PC-3 (cell line): ENCODE measurements at regions of chr1 and their contacts with region 1.

Region 1: DNA sequence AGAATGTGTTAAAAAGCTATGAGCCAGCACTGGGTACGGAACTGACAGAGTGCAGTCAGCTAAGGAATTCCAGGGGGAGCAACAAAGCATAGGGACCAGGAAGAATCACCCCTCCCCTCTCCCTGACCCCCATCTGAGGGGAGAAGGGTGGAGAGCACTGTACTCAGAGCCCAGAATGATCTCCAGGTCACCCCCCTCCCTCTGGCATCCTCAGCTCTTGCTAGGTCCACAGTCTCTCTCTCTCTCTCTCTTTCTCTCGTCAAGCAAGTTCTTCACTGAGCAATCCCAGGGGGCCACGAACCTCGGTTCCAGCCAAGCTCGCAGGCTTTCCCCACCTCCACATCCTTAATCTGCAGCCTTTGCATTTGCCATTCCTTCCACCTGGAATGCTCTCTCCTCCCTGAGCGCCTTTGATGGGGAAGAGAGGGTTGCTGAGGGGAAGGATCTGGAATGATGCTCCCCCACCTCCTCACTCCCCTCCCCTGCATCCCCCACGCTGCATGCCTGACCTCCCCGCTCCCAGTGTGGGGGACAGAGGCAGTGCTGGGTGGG is 6.7 kb upstream of the WASF2 start:
- DNase-seq: peak; percentile 33
- ATAC-seq: peak; percentile 38
- H3K4me3 ChIP-seq: peak overlapping the region; percentile 27; the same call in 1 of the 2 replicates
- H3K27ac ChIP-seq: no peak overlapping the region
- H3K4me1 ChIP-seq: no peaks in the 10 kb centered on the region
- H3K27me3 ChIP-seq: no peaks in the 10 kb centered on the region
- CTCF ChIP-seq: no peak

Region 2: DNA sequence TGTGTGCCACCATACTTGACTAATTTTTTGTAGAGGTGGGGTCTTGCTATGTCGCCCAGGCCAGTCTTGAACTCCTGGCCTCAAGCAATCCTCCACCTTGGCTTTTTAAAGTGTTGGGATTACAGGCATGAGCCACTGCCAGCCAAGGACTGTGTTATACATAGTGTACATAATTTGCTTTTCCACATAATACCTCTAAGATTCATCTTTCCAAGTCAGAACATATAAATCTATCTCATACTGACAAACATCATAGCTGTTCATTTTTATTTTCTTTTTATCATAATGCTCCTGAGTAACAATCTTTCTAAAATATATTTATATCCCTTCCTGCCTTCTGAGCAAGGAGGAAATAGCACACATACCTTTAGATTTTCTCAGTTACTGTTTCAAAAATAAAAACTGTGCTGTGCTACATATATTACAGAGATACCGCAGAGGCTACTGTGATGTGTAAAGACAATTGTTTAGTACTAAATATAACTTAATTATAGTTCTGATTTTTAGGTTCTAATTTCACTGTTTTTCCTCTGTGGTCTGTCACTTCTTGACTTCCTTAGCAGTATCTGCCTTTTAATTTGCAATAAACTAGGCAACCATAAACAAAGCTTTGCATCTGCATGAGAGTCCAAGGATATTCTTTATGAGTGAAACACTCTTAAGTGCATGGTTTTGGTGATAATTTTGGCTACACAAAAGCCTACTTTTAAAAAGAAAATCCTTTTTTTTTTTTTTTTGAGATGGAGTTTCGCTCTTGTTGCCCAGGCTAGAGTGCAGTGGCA is 532.4 kb after region 1 on chr1:
- CTCF ChIA-PET with region 1: no interaction called
- POLR2A ChIA-PET with region 1: interaction called, 12 read pairs
- intact Hi-C with region 1: no loop called
- DNase-seq: no peak
- ATAC-seq: no peak
- H3K4me3 ChIP-seq: no peak overlapping the region
- H3K27ac ChIP-seq: no peak overlapping the region
- H3K4me1 ChIP-seq: peaks cover 3% of the 10 kb centered on the region; the same call in 1 of the 2 replicates
- H3K27me3 ChIP-seq: no peaks in the 10 kb centered on the region
- CTCF ChIP-seq: no peak